ENCODE measurements at regions of chr9 and their contacts with region 1.

Region 1: DNA sequence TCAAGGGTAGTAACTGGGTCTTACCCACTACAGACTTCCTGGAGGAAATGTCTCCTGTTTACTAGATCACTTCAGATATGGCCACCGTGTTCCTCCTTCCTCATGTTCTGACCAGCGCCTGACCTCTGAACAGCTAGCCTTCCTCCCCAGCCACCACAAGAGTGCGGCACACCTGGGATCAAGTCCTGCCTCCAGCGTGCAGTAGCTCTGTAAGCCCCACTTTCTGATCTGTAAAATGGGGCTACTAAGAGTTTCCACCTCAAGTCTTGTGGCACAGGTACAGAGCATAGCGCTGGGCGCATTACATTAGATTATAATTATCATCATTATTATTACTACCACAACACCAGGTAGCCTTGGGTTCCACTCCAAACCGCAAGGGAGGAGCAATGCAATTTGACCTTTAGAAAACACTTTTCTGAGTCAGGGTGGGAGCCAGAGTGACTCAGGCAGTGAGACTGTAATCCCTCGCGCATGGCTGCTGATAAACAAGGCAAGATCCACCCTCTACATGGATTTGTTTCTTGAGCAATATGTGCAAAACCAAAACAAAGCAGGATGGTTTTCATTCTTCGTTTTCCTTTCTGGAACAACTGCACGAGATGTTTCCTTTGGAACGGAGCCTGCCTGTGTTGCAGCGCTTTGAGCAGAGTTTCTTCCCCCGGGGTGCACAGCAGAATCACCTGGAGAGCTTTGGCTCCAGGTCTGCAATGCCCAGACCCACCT is 65.0 kb upstream of the ANGPTL2 start:
- DNase-seq: peak; percentile 94
- H3K4me3 ChIP-seq: no peak overlapping the region
- H3K27ac ChIP-seq: peak overlapping the region; percentile 83 to 89 (median 86)
- H3K4me1 ChIP-seq: peaks cover 51 to 65% (median 56%) of the 10 kb centered on the region in 4 donors
- H3K27me3 ChIP-seq: no peaks in the 10 kb centered on the region
- CTCF ChIP-seq: no peak
- EP300 ChIP-seq: peak; percentile 65
- POLR2A ChIP-seq: no peak

Region 2: GRCh38 chr9:126532019-126532462 is 655.4 kb before region 1 on chr9:
- intact Hi-C with region 1: no loop called
- DNase-seq: no peak
- H3K4me3 ChIP-seq: no peak overlapping the region
- H3K27ac ChIP-seq: peak overlapping the region in 1 of 4 donors; percentile 10
- H3K4me1 ChIP-seq: peaks cover 0 to 18% (median 12%) of the 10 kb centered on the region in 4 donors
- H3K27me3 ChIP-seq: peaks cover 0 to 45% (median 0%) of the 10 kb centered on the region in 4 donors
- CTCF ChIP-seq: no peak
- EP300 ChIP-seq: no peak
- POLR2A ChIP-seq: no peak

Region 3: GRCh38 chr9:127122176-127123063 is 65.0 kb before region 1 on chr9 and contains the start of gene ANGPTL2:
- intact Hi-C with region 1: loop called (anchors 5 kb)
- DNase-seq: peak; percentile 95
- H3K4me3 ChIP-seq: peak within 1 kb of the TSS; percentile 61 to 71 (median 64)
- H3K27ac ChIP-seq: peak within 1 kb of the TSS; percentile 91 to 96 (median 94)
- H3K4me1 ChIP-seq: peaks cover 41 to 82% (median 79%) of the 10 kb centered on the region in 4 donors
- H3K27me3 ChIP-seq: no peaks in the 10 kb centered on the region
- CTCF ChIP-seq: no peak
- EP300 ChIP-seq: no peak
- POLR2A ChIP-seq: no peak
- total RNA-seq, gene ANGPTL2: 29.5 to 57.0 (median 41.3) TPM

Region 4: GRCh38 chr9:127263664-127264063 is 76.3 kb after region 1 on chr9:
- intact Hi-C with region 1: no loop called
- DNase-seq: no peak
- H3K4me3 ChIP-seq: no peak overlapping the region
- H3K27ac ChIP-seq: peak overlapping the region in 1 of 4 donors; percentile 23
- H3K4me1 ChIP-seq: peaks cover 12 to 36% (median 31%) of the 10 kb centered on the region in 4 donors
- H3K27me3 ChIP-seq: no peaks in the 10 kb centered on the region
- CTCF ChIP-seq: no peak
- EP300 ChIP-seq: no peak
- POLR2A ChIP-seq: no peak

Measured in esophagus muscularis mucosa (tissue), 4 donors.